Activated B cell treated with CpG ODN at 0.5 μM for 24 hours (primary cell): ENCODE measurements at regions of chr1 and their contacts with region 1.

Region 1: GRCh38 chr1:40691538-40692428 is at the start of gene NFYC:
- DNase-seq: peak; percentile 86
- ATAC-seq: peak; percentile 81
- H3K4me3 Mint-ChIP-seq: peak within 1 kb of the TSS; percentile 94
- H3K27ac Mint-ChIP-seq: peak within 1 kb of the TSS; percentile 94
- H3K4me1 Mint-ChIP-seq: peaks cover 70% of the 10 kb centered on the region
- H3K27me3 Mint-ChIP-seq: no peaks in the 10 kb centered on the region
- CTCF ChIP-seq: no peak
- total RNA-seq, gene NFYC: 68.7 and 76.0 TPM in 2 replicates

Region 2: GRCh38 chr1:40449684-40450494 is 241.9 kb before region 1 on chr1 and contains the start of gene ZFP69B:
- CTCF ChIA-PET with region 1: no interaction called
- POLR2A ChIA-PET with region 1: interaction called, 10 read pairs
- intact Hi-C with region 1: no loop called
- DNase-seq: peak; percentile 97
- ATAC-seq: peak; percentile 80
- H3K4me3 Mint-ChIP-seq: peak within 1 kb of the TSS; percentile 86
- H3K27ac Mint-ChIP-seq: peak within 1 kb of the TSS; percentile 90
- H3K4me1 Mint-ChIP-seq: peaks cover 30% of the 10 kb centered on the region
- H3K27me3 Mint-ChIP-seq: no peaks in the 10 kb centered on the region
- CTCF ChIP-seq: no peak
- total RNA-seq, gene ZFP69B: 8.9 and 10.4 TPM in 2 replicates

Region 3: GRCh38 chr1:40668769-40669525 is 22.8 kb before region 1 on chr1:
- CTCF ChIA-PET with region 1: interaction called, 13 read pairs
- POLR2A ChIA-PET with region 1: interaction called, 27 read pairs
- intact Hi-C with region 1: loop called (anchors 1 kb)
- DNase-seq: peak; percentile 82
- ATAC-seq: peak; percentile 74
- H3K4me3 Mint-ChIP-seq: peak overlapping the region; percentile 75
- H3K27ac Mint-ChIP-seq: peak overlapping the region; percentile 41
- H3K4me1 Mint-ChIP-seq: peaks cover 31% of the 10 kb centered on the region
- H3K27me3 Mint-ChIP-seq: no peaks in the 10 kb centered on the region
- CTCF ChIP-seq: peak; percentile 76

Region 4: GRCh38 chr1:40722636-40723035 is 30.9 kb after region 1 on chr1:
- CTCF ChIA-PET with region 1: interaction called, 5 read pairs
- POLR2A ChIA-PET with region 1: interaction called, 306 read pairs
- intact Hi-C with region 1: no loop called
- DNase-seq: no peak
- ATAC-seq: no peak
- H3K4me3 Mint-ChIP-seq: no peak overlapping the region
- H3K27ac Mint-ChIP-seq: peak overlapping the region; percentile 7
- H3K4me1 Mint-ChIP-seq: peaks cover 68% of the 10 kb centered on the region
- H3K27me3 Mint-ChIP-seq: no peaks in the 10 kb centered on the region
- CTCF ChIP-seq: no peak

Region 5: GRCh38 chr1:40802078-40802741 is 110.4 kb after region 1 on chr1:
- CTCF ChIA-PET with region 1: no interaction called
- POLR2A ChIA-PET with region 1: interaction called, 8 read pairs
- intact Hi-C with region 1: loop called (anchors 5 kb)
- DNase-seq: peak; percentile 75
- ATAC-seq: peak; percentile 96
- H3K4me3 Mint-ChIP-seq: peak overlapping the region; percentile 77
- H3K27ac Mint-ChIP-seq: peak overlapping the region; percentile 68
- H3K4me1 Mint-ChIP-seq: peaks cover 33% of the 10 kb centered on the region
- H3K27me3 Mint-ChIP-seq: no peaks in the 10 kb centered on the region
- CTCF ChIP-seq: no peak

Region 6: DNA sequence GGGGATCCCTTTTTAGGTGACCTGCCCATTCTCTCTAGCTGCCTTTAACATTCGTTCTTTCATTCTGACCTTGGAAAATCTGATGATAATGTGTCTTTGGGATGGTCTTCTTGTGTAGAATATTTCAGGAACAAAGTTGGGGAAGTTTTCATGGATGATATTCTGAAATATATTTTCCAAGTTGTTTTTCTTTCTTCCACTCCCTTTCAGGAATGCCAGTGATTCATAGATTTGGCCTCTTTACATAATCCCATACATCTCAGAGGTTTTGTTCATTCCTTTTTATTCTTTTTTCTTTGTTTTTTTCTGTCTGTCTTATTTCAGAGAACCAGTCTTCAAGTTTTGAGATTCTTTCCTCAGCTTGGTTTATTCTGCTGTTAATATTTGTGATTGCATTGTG is 564.2 kb after region 1 on chr1:
- CTCF ChIA-PET with region 1: no interaction called
- POLR2A ChIA-PET with region 1: no interaction called
- intact Hi-C with region 1: no loop called
- DNase-seq: no peak
- ATAC-seq: no peak
- H3K4me3 Mint-ChIP-seq: no peak overlapping the region
- H3K27ac Mint-ChIP-seq: no peak overlapping the region
- H3K4me1 Mint-ChIP-seq: peaks cover 2% of the 10 kb centered on the region
- H3K27me3 Mint-ChIP-seq: peaks cover 13% of the 10 kb centered on the region
- CTCF ChIP-seq: no peak